CD14-positive monocyte (primary cell): ENCODE measurements at regions of chrX and their contacts with region 1.

Region 1: DNA sequence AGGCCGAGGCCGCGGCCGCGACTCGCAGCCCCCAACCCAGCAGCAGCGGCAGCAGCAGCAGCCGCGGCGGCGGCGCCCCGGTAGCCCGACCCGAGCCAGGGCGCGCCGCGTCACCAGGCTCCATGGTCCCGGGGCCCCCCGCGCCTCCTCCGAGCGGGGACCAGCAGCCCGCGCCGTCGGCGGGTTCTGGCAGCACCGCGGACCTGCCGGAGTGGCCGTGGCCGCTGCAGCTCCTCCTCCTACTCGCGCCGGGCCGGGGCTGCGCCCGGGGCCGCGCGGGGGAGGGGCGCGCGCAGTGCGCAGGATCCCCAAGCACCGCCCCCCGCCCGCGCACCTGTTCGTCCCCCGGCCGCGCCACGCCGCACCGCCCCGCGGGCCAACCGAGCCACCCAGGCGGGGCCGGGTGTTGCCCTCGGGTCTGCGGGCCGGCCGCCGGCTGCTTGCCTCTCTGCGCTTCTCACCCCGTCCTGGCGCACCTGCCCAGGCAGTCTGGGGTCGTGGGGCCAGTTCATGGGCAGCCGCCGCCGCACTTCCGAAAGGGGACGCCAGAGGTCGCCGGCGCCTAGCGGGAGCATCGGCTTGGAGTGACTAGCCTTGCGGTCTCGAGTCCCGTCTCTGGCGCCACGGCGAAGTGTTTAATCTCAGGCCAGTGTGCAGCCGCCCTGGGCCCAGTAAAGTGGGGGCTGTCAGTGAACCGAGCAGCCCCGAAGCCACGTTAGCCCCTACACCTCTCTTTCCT is at the start of gene SLC9A7:
- DNase-seq: peak; percentile 59 to 69 (median 60)
- H3K4me3 ChIP-seq: peak within 1 kb of the TSS; percentile 42 to 73 (median 57)
- H3K4me3 Mint-ChIP-seq: peak within 1 kb of the TSS; percentile 92 to 95
- H3K27ac ChIP-seq: no peak within 1 kb of the TSS
- H3K27ac Mint-ChIP-seq: peak within 1 kb of the TSS in 6 of 7 donors; percentile 3 to 80 (median 56)
- H3K4me1 ChIP-seq: peaks cover 30 to 36% of the 10 kb centered on the region in 2 donors
- H3K4me1 Mint-ChIP-seq: peaks cover 38% of the 10 kb centered on the region
- H3K27me3 ChIP-seq: peaks cover 0 to 3% of the 10 kb centered on the region in 2 donors
- H3K27me3 Mint-ChIP-seq: peaks cover 0 to 19% (median 5%) of the 10 kb centered on the region in 3 donors
- CTCF ChIP-seq: peak; percentile 78
- polyA plus RNA-seq, gene SLC9A7: 0.73 to 2.0 (median 1.0) TPM

Region 2: DNA sequence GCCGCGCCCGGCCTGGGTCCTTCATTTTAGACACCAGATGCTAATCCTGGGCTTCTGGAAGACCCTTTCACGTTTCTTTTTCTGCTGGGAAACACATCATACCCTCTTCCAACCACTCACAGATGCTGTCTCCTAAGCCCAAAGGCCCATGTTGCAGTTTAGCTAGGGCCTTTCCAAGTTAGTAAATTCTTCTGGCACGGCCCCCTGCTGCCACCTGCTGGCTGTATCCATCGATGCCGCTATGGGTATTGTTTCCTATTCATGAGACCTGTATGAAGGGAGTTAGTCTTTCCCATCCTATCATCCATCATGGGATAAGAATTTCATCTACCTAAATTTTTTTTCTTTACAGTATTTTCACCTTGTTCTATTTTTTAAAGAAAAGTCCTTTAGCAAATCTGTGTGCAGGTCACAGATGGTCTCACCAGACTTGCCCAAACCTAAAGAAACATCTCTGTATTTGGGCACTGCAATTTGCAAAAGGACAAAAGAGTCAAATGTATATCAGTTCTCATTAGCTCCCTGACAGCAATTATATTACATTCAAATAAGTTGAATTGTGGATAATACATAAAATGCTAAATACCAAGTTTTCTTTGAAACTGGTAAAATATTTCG is 37.6 kb after region 1 on chrX:
- intact Hi-C with region 1: loop called (anchors 2 kb)
- DNase-seq: peak; percentile 60 to 75 (median 66)
- H3K4me3 ChIP-seq: no peak overlapping the region
- H3K4me3 Mint-ChIP-seq: no peak overlapping the region
- H3K27ac ChIP-seq: no peak overlapping the region
- H3K27ac Mint-ChIP-seq: no peak overlapping the region
- H3K4me1 ChIP-seq: peaks cover 19 to 26% of the 10 kb centered on the region in 2 donors
- H3K4me1 Mint-ChIP-seq: peaks cover 19% of the 10 kb centered on the region
- H3K27me3 ChIP-seq: no peaks in the 10 kb centered on the region
- H3K27me3 Mint-ChIP-seq: peaks cover 0 to 9% (median 2%) of the 10 kb centered on the region in 3 donors
- CTCF ChIP-seq: peak; percentile 74

Region 3: GRCh38 chrX:47101206-47101605 is 342.1 kb after region 1 on chrX:
- intact Hi-C with region 1: no loop called
- DNase-seq: no peak
- H3K4me3 ChIP-seq: no peak overlapping the region
- H3K4me3 Mint-ChIP-seq: no peak overlapping the region
- H3K27ac ChIP-seq: no peak overlapping the region
- H3K27ac Mint-ChIP-seq: no peak overlapping the region
- H3K4me1 ChIP-seq: no peaks in the 10 kb centered on the region
- H3K4me1 Mint-ChIP-seq: no peaks in the 10 kb centered on the region
- H3K27me3 ChIP-seq: no peaks in the 10 kb centered on the region
- H3K27me3 Mint-ChIP-seq: peaks cover 0 to 23% (median 0%) of the 10 kb centered on the region in 3 donors
- CTCF ChIP-seq: no peak